ENCODE measurements at regions of chr3 and their contacts with region 1.

Region 1: DNA sequence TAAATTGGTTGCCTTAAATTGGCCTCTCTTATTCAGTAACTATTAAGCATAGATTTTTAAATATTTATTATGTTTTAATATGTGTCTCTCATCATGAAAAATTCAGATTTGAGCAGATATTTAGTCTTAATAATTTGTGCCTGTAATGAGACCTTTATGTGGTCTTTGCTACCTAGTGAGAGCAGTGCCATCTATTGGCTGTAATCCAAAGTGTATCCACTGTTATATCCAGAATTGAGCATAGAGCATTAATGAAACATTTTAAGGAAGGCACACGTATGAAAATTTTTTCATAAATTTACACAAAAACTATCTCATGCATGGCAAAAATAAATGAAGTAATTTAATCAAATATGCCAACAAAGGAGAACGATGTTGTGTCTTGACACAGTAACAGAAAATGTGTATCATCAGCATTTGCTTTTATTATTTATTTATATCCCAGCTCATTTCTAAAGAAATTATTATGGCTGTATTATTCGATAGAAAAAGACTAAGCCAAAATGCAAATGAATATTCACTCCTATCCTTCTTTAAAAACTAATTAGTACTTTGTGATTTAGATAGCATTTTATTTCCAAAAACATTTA is 203.5 kb downstream of the RSRC1 start:
- DNase-seq: no peak
- ATAC-seq: peak; percentile 82
- H3K4me3 ChIP-seq: no peak overlapping the region
- H3K27ac ChIP-seq: no peak overlapping the region
- H3K4me1 ChIP-seq: peaks cover 4% of the 10 kb centered on the region; the same call in 1 of the 2 replicates
- H3K27me3 ChIP-seq: no peaks in the 10 kb centered on the region
- CTCF ChIP-seq: peak; percentile 48 to 71 (median 59); a peak in 5 of 6 replicates
- EP300 ChIP-seq: no peak
- POLR2A ChIP-seq: no peak
- RAD21 ChIP-seq: peak; percentile 79

Region 2: GRCh38 chr3:157606011-157606851 is 707.2 kb before region 1 on chr3:
- CTCF ChIA-PET with region 1: interaction called, 3 read pairs
- POLR2A ChIA-PET with region 1: no interaction called
- RAD21 ChIA-PET with region 1: no interaction called
- SMC1A ChIA-PET with region 1: no interaction called
- in situ Hi-C with region 1: loop called (anchors 25 kb)
- intact Hi-C with region 1: no loop called
- DNase-seq: no peak
- ATAC-seq: peak; percentile 97
- H3K4me3 ChIP-seq: no peak overlapping the region
- H3K27ac ChIP-seq: no peak overlapping the region
- H3K4me1 ChIP-seq: no peaks in the 10 kb centered on the region
- H3K27me3 ChIP-seq: peaks cover 0 to 3% of the 10 kb centered on the region in 2 experiments; a peak in 2 of 4 replicates
- CTCF ChIP-seq: peak; percentile 60 to 85 (median 84)
- EP300 ChIP-seq: no peak
- POLR2A ChIP-seq: no peak
- RAD21 ChIP-seq: peak; percentile 39; the same call in 1 of the 2 replicates

Region 3: GRCh38 chr3:157692468-157692867 is 621.0 kb before region 1 on chr3:
- CTCF ChIA-PET with region 1: no interaction called
- POLR2A ChIA-PET with region 1: no interaction called
- RAD21 ChIA-PET with region 1: no interaction called
- SMC1A ChIA-PET with region 1: no interaction called
- in situ Hi-C with region 1: no loop called
- intact Hi-C with region 1: loop called (anchors 5 kb)
- DNase-seq: no peak
- ATAC-seq: peak; percentile 77
- H3K4me3 ChIP-seq: no peak overlapping the region
- H3K27ac ChIP-seq: no peak overlapping the region
- H3K4me1 ChIP-seq: no peaks in the 10 kb centered on the region
- H3K27me3 ChIP-seq: no peaks in the 10 kb centered on the region
- CTCF ChIP-seq: no peak
- EP300 ChIP-seq: peak in 1 of 2 experiments; percentile 33; a peak in 1 of 4 replicates
- POLR2A ChIP-seq: no peak
- RAD21 ChIP-seq: no peak

Region 4: DNA sequence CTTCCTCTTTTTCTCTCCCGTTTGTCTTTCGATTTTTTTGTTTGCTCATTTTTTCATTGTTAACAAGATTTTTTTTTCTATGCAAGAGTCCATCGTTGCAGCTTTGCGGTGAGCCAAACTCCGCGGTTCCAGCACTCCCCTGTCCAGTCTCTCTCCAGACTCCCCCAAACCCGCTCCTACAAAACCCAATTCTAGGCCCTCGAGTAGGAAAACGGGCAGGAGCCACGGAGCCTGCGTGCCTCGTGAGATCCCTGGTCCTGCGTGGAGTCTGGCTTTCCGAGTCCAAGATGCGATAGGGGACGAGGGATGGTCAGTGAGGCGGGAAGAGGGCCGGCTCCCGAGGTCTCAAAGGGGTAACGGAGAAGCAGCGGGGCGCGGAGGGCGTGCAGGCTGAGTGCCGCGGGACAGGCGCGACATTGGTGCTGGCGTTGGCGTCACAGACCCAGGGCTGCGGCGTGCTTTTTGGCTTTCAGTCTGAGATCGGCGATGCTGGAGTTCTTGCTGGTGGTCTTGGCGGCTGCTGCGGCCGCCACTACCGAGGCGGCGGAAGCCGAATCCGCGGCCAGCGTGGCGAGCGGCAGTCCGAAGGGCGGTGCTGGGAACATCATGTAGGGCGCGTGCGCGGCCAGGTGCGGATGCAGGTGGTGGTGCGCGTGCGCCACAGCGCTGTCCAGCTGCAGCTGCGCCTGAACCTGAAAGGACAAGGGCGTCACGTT is 215.7 kb before region 1 on chr3:
- CTCF ChIA-PET with region 1: no interaction called
- POLR2A ChIA-PET with region 1: no interaction called
- RAD21 ChIA-PET with region 1: interaction called, 3 read pairs
- SMC1A ChIA-PET with region 1: no interaction called
- in situ Hi-C with region 1: no loop called
- intact Hi-C with region 1: loop called (anchors 5 kb)
- DNase-seq: peak; percentile 54
- ATAC-seq: peak; percentile 95
- H3K4me3 ChIP-seq: peak overlapping the region; percentile 85
- H3K27ac ChIP-seq: no peak overlapping the region
- H3K4me1 ChIP-seq: peaks cover 6% of the 10 kb centered on the region; the same call in 1 of the 2 replicates
- H3K27me3 ChIP-seq: peaks cover 2 to 20% of the 10 kb centered on the region in 2 experiments
- CTCF ChIP-seq: no peak
- EP300 ChIP-seq: no peak
- POLR2A ChIP-seq: peak; percentile 69
- RAD21 ChIP-seq: no peak

Region 5: DNA sequence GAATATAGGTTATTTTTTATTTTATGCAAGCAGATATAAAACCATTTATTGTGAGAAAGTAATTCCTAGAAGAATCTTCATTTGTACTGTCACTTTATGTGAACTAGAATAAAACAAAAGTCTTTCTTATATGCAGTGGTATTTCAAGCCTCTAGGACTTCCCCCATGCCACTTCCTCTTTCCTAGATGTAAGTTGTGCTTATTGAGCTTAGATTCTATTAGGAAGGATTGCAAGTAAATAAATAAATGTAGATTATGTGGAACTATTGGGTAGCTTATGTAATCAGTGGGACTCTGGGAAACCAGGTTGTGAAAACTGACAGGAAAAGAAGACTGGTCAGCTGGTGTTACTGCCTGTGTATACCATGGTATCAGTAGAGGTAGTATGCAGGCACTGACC is 33.8 kb before region 1 on chr3:
- CTCF ChIA-PET with region 1: no interaction called
- POLR2A ChIA-PET with region 1: no interaction called
- RAD21 ChIA-PET with region 1: no interaction called
- SMC1A ChIA-PET with region 1: no interaction called
- in situ Hi-C with region 1: no loop called
- intact Hi-C with region 1: no loop called
- DNase-seq: no peak
- ATAC-seq: peak; percentile 57; the same call in 2 of the 3 replicates
- H3K4me3 ChIP-seq: no peak overlapping the region
- H3K27ac ChIP-seq: no peak overlapping the region
- H3K4me1 ChIP-seq: no peaks in the 10 kb centered on the region
- H3K27me3 ChIP-seq: no peaks in the 10 kb centered on the region
- CTCF ChIP-seq: no peak
- EP300 ChIP-seq: no peak
- POLR2A ChIP-seq: no peak
- RAD21 ChIP-seq: no peak

Region 6: GRCh38 chr3:158297940-158298339 is 15.5 kb before region 1 on chr3:
- CTCF ChIA-PET with region 1: interaction called, 11 read pairs
- POLR2A ChIA-PET with region 1: interaction called, 3 read pairs
- RAD21 ChIA-PET with region 1: interaction called, 3 read pairs
- SMC1A ChIA-PET with region 1: interaction called, 15 read pairs
- in situ Hi-C with region 1: no loop called
- intact Hi-C with region 1: no loop called
- DNase-seq: no peak
- ATAC-seq: no peak
- H3K4me3 ChIP-seq: no peak overlapping the region
- H3K27ac ChIP-seq: no peak overlapping the region
- H3K4me1 ChIP-seq: no peaks in the 10 kb centered on the region
- H3K27me3 ChIP-seq: no peaks in the 10 kb centered on the region
- CTCF ChIP-seq: no peak
- EP300 ChIP-seq: no peak
- POLR2A ChIP-seq: no peak
- RAD21 ChIP-seq: no peak

Measured in GM12878 (cell line).